Motor neuron (in vitro differentiated cells): ENCODE measurements at regions of chr17 and their contacts with region 1.

Region 1: GRCh38 chr17:75405365-75406221 is at the start of gene GRB2:
- ATAC-seq: peak; percentile 83 to 95 (median 89)
- H3K4me3 ChIP-seq: peak within 1 kb of the TSS; percentile 54 to 91 (median 74)
- H3K27ac ChIP-seq: peak within 1 kb of the TSS; percentile 68 to 85
- H3K4me1 ChIP-seq: peaks cover 8 to 10% of the 10 kb centered on the region in 2 donors
- total RNA-seq, gene GRB2: 37.1 to 76.5 (median 43.9) TPM

Region 2: GRCh38 chr17:75289115-75289831 is 116.3 kb before region 1 on chr17 and contains the start of gene SLC25A19:
- in situ Hi-C with region 1: loop called in 1 of 9 experiments (anchors 25 kb)
- ATAC-seq: peak; percentile 95 to 98 (median 98)
- H3K4me3 ChIP-seq: peak within 1 kb of the TSS; percentile 48 to 85 (median 53)
- H3K27ac ChIP-seq: no peak within 1 kb of the TSS
- H3K4me1 ChIP-seq: peaks cover 0 to 3% of the 10 kb centered on the region in 2 donors
- total RNA-seq, gene SLC25A19: 3.7 to 17.9 (median 5.9) TPM

Region 3: DNA sequence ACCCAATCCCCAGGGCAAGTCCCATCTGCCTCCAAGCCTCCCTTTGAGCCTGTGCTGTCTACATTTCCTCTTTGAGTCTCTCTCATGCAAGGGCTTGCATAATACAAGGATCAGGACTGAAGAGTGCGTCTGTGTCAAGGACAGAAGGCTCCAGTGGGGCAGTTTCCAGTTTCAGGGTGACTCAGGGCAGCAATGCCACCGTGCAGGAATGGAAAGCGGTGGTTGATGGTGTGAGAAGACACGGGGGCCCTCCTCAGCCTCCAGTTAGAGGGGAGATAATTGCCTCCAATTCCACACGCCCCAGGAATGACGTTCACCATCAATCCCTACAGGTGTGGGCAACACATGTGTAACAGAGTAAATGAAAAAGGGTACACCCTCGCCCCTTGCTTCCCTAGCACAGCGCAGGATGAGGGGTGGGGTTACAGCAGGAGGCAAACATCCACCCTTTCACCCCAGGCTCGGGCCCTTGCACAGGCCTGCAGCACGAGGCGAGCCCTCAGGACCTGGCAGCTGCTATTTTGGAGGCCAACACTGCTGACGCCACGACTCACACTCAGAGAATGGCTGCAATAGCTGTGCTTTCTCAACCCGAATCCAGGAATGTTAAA is 91.5 kb before region 1 on chr17:
- in situ Hi-C with region 1: loop called in 1 of 9 experiments (anchors 25 kb)
- ATAC-seq: no peak
- H3K4me3 ChIP-seq: no peak overlapping the region
- H3K27ac ChIP-seq: no peak overlapping the region
- H3K4me1 ChIP-seq: peaks cover 0 to under 1% of the 10 kb centered on the region in 2 donors

Region 4: DNA sequence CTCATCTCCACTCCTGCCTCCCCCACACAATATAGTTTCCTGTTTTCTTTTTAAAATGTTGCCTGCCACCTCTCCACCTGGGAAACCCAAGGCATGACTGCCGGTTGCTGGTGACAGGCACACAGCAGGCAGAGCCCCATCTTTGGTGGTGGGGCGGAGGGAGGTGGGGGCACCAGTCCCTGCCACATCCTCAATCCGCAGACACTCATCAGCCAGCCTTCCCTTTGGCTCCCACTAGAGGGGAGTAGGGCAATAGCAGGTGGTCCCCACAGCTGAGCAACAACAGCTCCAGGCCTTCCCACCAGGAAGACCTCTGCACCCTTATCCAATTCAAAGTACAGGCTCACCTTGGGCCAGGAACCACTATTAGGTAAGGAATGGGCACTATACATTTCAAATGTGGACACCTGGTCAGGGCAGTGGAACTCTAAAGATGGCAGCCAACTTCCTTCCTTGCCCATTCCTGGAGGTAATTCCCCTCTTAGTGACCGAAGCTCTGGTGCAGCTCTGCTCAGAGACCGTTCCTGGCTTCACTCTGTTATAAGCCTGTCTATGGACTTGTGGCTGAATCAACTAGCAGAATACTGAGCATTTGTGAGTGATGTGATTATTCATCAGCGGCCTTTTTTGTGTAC is 247.4 kb after region 1 on chr17:
- in situ Hi-C with region 1: no loop called
- ATAC-seq: peak in 7 of 8 experiments; percentile 20 to 75 (median 48)
- H3K4me3 ChIP-seq: no peak overlapping the region
- H3K27ac ChIP-seq: no peak overlapping the region
- H3K4me1 ChIP-seq: no peaks in the 10 kb centered on the region